Calu3 (cell line): ENCODE measurements at regions of chr1 and their contacts with region 1.

Region 1: GRCh38 chr1:25796811-25797458 is 3.1 kb upstream of the SELENON start:
- DNase-seq: peak; percentile 81
- H3K4me3 Mint-ChIP-seq: no peak overlapping the region
- H3K27ac Mint-ChIP-seq: no peak overlapping the region
- H3K4me1 Mint-ChIP-seq: peaks cover 11% of the 10 kb centered on the region
- H3K27me3 Mint-ChIP-seq: peaks cover 39% of the 10 kb centered on the region
- CTCF ChIP-seq: peak; percentile 38

Region 2: GRCh38 chr1:25503551-25504426 is 293.1 kb before region 1 on chr1:
- CTCF ChIA-PET with region 1: no interaction called
- intact Hi-C with region 1: loop called (anchors 5 kb)
- DNase-seq: peak; percentile 75
- H3K4me3 Mint-ChIP-seq: no peak overlapping the region
- H3K27ac Mint-ChIP-seq: no peak overlapping the region
- H3K4me1 Mint-ChIP-seq: no peaks in the 10 kb centered on the region
- H3K27me3 Mint-ChIP-seq: no peaks in the 10 kb centered on the region
- CTCF ChIP-seq: peak; percentile 39

Region 3: GRCh38 chr1:25610822-25611630 is 185.9 kb before region 1 on chr1:
- CTCF ChIA-PET with region 1: interaction called, 4 read pairs
- intact Hi-C with region 1: loop called (anchors 5 kb)
- DNase-seq: no peak
- H3K4me3 Mint-ChIP-seq: no peak overlapping the region
- H3K27ac Mint-ChIP-seq: no peak overlapping the region
- H3K4me1 Mint-ChIP-seq: no peaks in the 10 kb centered on the region
- H3K27me3 Mint-ChIP-seq: peaks cover 83% of the 10 kb centered on the region
- CTCF ChIP-seq: no peak

Region 4: GRCh38 chr1:25758466-25759077 is 38.4 kb before region 1 on chr1:
- CTCF ChIA-PET with region 1: no interaction called
- intact Hi-C with region 1: loop called (anchors 2 kb)
- DNase-seq: no peak
- H3K4me3 Mint-ChIP-seq: no peak overlapping the region
- H3K27ac Mint-ChIP-seq: no peak overlapping the region
- H3K4me1 Mint-ChIP-seq: no peaks in the 10 kb centered on the region
- H3K27me3 Mint-ChIP-seq: peaks cover 72% of the 10 kb centered on the region
- CTCF ChIP-seq: no peak